Activated B cell treated with CpG ODN at 0.5 μM for 24 hours (primary cell): ENCODE measurements at regions of chr17 and their contacts with region 1.

Region 1: GRCh38 chr17:73645050-73645978 is 1.1 kb upstream of the SDK2 start:
- DNase-seq: peak; percentile 62
- ATAC-seq: peak; percentile 64
- H3K4me3 Mint-ChIP-seq: peak overlapping the region; percentile 75
- H3K27ac Mint-ChIP-seq: no peak overlapping the region
- H3K4me1 Mint-ChIP-seq: peaks cover 27% of the 10 kb centered on the region
- H3K27me3 Mint-ChIP-seq: peaks cover 4% of the 10 kb centered on the region
- CTCF ChIP-seq: no peak

Region 2: DNA sequence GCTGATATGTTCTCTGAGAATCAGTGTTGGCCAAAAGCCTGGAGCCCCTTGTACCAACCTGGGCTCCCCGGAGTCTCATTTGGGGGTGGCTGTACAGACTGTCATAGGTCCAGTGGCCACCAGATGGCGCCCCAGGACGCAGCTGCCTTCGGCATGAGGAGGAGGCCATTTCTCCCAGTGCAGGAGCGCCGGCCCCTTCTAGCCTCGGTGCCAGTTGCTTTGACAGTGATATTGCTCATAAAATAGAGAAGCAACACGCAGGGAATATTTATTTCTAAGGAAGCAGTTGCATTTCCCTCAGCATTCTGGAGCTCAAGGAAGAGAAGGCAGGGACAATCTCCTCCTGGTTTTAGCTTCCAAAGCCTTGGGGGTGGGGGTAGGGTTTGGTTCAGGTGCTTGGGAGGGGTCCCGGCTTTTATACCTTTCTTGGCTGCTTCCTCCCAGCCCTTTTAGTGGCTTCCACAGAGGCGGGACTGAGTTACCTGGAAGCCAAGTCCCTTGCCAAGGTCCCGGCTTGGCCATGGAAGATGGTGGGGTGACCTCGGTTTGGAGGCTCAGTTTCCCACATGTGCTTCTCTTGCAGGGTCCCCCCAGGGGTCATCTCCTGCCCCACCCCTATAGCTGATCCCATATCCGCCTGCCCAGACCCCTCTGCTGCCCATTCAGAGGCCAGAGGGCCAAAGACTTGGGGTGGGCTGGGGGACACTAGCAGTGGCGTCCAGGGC is 215.7 kb before region 1 on chr17:
- CTCF ChIA-PET with region 1: interaction called, 17 read pairs
- POLR2A ChIA-PET with region 1: no interaction called
- intact Hi-C with region 1: loop called (anchors 1 kb)
- DNase-seq: peak; percentile 80
- ATAC-seq: peak; percentile 97
- H3K4me3 Mint-ChIP-seq: no peak overlapping the region
- H3K27ac Mint-ChIP-seq: no peak overlapping the region
- H3K4me1 Mint-ChIP-seq: peaks cover 10% of the 10 kb centered on the region
- H3K27me3 Mint-ChIP-seq: peaks cover 2% of the 10 kb centered on the region
- CTCF ChIP-seq: peak; percentile 97

Region 3: DNA sequence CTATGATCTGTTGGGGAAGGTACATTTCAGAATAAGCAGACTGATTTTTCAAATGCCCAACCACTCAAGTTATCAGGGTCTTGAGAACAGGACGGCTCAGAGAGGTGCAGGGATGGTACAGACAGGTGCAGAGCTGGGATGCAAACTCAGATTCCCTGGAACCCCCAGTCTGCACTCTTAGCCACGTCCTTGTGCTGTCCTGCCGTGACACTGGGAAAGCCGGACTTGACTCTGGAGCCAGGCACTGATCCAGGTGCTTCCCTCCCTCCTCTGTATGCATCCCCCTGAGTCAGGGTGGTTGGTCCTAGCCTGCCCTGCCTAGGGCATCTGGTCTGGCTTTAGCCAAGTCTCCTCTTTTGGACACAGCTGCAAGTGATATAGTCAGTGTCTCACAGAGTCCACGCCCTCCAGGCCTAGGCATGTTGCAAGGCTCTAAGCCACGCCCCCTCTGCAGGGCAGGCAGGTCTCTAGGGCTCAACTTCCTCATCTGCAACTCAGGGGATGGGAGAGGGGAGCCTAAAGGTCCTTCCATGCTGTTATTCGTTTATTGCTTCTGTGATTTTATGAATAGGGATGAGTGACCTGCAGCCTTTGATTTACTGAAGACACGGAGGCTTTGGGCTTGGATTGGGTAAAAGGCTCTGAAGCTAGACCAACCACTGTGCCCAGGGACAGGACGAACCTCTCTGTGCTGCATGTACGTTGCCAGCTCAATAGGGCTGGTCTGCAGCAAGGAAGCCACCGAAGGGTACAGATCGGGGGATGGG is 98.4 kb before region 1 on chr17:
- CTCF ChIA-PET with region 1: no interaction called
- POLR2A ChIA-PET with region 1: interaction called, 4 read pairs
- intact Hi-C with region 1: loop called (anchors 5 kb)
- DNase-seq: peak; percentile 43
- ATAC-seq: peak; percentile 98
- H3K4me3 Mint-ChIP-seq: no peak overlapping the region
- H3K27ac Mint-ChIP-seq: no peak overlapping the region
- H3K4me1 Mint-ChIP-seq: peaks cover 40% of the 10 kb centered on the region
- H3K27me3 Mint-ChIP-seq: no peaks in the 10 kb centered on the region
- CTCF ChIP-seq: no peak

Region 4: GRCh38 chr17:73586921-73587602 is 58.3 kb before region 1 on chr17:
- CTCF ChIA-PET with region 1: interaction called, 18 read pairs
- POLR2A ChIA-PET with region 1: interaction called, 10 read pairs
- intact Hi-C with region 1: no loop called
- DNase-seq: no peak
- ATAC-seq: no peak
- H3K4me3 Mint-ChIP-seq: peak overlapping the region; percentile 3
- H3K27ac Mint-ChIP-seq: peak overlapping the region; percentile 90
- H3K4me1 Mint-ChIP-seq: peaks cover 79% of the 10 kb centered on the region
- H3K27me3 Mint-ChIP-seq: no peaks in the 10 kb centered on the region
- CTCF ChIP-seq: no peak

Region 5: DNA sequence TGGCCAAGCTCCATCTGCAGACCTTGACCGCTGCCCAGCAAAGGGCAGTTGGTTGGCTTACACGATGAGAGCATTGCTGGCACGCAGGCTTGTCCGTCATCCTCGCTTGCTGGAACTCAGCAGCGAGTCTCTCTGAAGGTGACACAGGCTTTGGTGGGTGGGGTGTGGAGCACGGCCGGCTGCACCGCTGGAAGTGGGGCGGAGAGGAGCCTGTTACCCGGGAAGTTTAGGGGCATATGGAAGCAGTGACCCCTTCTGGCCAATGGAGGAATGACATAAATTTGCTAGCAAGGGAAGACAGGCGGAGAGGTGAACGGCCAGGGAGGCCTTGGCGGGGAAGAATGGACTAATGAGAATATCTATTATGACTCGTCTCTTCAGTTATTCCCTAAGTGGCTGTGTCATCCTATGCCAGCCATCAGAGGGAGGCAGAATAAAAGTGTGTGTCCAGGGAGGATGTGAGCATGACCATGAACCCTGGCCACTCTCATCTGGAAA is 64.8 kb after region 1 on chr17:
- CTCF ChIA-PET with region 1: interaction called, 3 read pairs
- POLR2A ChIA-PET with region 1: no interaction called
- intact Hi-C with region 1: loop called (anchors 5 kb)
- DNase-seq: no peak
- ATAC-seq: peak; percentile 47
- H3K4me3 Mint-ChIP-seq: peak overlapping the region; percentile 1
- H3K27ac Mint-ChIP-seq: no peak overlapping the region
- H3K4me1 Mint-ChIP-seq: peaks cover 27% of the 10 kb centered on the region
- H3K27me3 Mint-ChIP-seq: peaks cover 10% of the 10 kb centered on the region
- CTCF ChIP-seq: peak; percentile 27

Region 6: DNA sequence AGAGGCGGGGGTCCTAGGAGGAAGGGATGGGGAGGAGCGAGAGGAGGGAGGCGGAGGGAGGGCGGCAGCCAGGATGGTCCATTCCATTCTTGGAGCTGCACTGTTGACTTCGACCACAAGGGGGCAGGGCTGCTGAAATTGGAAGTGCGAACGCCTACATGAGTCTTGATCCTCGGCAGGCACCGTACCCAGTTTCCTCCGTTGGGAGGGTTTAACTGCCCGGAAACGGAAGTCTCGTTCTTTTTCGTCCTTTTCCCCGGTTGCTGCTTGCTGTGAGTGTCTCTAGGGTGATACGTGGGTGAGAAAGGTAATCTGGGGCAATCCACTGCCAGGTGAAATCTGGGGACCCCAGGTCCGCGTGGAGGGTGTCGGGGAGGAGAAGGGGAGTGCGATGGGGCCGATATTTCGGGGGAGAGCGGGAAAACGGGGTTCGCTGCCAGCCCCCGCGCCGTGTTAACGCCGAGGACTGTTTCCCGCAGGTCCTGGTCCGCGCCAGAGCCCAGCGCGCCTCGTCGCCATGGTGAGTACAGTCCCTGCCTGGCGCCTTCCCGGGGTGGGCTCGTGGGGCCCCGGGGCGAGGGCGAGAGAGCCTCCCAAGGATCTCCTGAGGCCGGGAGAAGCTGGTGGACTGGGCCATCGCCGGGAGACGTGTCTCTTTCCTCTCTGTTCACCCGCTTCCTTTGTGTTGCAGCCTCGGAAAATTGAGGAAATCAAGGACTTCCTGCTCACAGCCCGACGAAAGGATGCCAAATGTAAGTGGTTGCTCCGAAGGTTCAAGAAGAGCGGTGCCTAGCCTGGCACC is 558.3 kb after region 1 on chr17 and contains the start of gene RPL38:
- CTCF ChIA-PET with region 1: interaction called, 3 read pairs
- POLR2A ChIA-PET with region 1: no interaction called
- intact Hi-C with region 1: loop called (anchors 10 kb)
- DNase-seq: peak; percentile 90
- ATAC-seq: peak; percentile 94
- H3K4me3 Mint-ChIP-seq: peak within 1 kb of the TSS; percentile 100
- H3K27ac Mint-ChIP-seq: peak within 1 kb of the TSS; percentile 98
- H3K4me1 Mint-ChIP-seq: peaks cover 47% of the 10 kb centered on the region
- H3K27me3 Mint-ChIP-seq: peaks cover 23% of the 10 kb centered on the region
- CTCF ChIP-seq: no peak
- total RNA-seq, gene RPL38: 1,330 and 1,676 TPM in 2 replicates